Ovary (tissue), 10 donors: ENCODE measurements at regions of chr17 and their contacts with region 1.

Region 1: DNA sequence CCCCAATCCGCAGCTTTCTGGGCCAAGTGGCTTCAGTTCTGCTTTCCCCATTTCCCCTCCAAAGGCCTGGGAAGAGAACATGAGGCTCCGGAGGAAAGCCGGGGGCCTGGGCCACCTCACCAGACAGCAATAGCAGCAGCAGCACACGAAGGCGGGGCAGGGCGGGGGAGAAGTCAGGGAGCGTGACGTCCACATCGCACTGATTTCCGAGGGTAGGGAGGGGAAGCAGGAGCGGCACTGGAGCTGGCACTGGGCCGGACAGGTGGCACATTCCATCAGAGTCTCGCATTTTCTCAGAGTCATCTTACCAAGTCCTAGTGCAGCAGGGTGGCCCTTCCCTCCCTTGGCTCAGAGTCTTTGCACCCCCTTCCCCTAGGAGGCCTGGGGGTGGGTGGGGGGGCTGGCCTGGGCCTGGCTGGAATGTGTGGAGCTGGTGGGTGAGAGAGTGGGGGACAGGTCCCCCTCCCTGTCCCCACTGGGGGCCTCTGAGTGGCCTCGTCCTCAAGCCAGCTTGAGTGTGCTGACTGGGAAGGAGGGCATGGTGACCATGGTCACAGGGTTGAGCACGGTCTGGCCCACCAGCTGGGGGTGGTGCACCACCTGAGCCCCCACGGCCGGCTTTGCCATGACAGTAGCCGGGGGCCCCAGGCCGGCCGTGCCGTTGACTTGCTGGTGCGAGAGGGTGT is 14.3 kb downstream of the MNT start:
- DNase-seq: peak in 3 of 5 donors; percentile 35 to 50 (median 48)
- H3K4me3 ChIP-seq: no peak overlapping the region
- H3K27ac ChIP-seq: peak overlapping the region in 1 of 2 donors; percentile 77
- H3K4me1 ChIP-seq: peaks cover 10% of the 10 kb centered on the region
- H3K27me3 ChIP-seq: no peaks in the 10 kb centered on the region
- CTCF ChIP-seq: no peak
- EP300 ChIP-seq: no peak
- POLR2A ChIP-seq: no peak

Region 2: GRCh38 chr17:2181206-2181896 is 205.2 kb before region 1 on chr17:
- intact Hi-C with region 1: no loop called
- DNase-seq: peak; percentile 69 to 82 (median 77)
- H3K4me3 ChIP-seq: no peak overlapping the region
- H3K27ac ChIP-seq: peak overlapping the region in 1 of 2 donors; percentile 85
- H3K4me1 ChIP-seq: peaks cover 51% of the 10 kb centered on the region
- H3K27me3 ChIP-seq: no peaks in the 10 kb centered on the region
- CTCF ChIP-seq: no peak
- EP300 ChIP-seq: no peak
- POLR2A ChIP-seq: no peak

Region 3: GRCh38 chr17:2688351-2689342 is 302.1 kb after region 1 on chr17:
- intact Hi-C with region 1: loop called in 1 of 4 experiments (anchors 10 kb)
- DNase-seq: peak in 3 of 5 donors; percentile 29 to 54 (median 34)
- H3K4me3 ChIP-seq: no peak overlapping the region
- H3K27ac ChIP-seq: no peak overlapping the region
- H3K4me1 ChIP-seq: no peaks in the 10 kb centered on the region
- H3K27me3 ChIP-seq: no peaks in the 10 kb centered on the region
- CTCF ChIP-seq: no peak
- EP300 ChIP-seq: no peak
- POLR2A ChIP-seq: no peak